Activated T-helper 2 cell treated with anti-CD3 and anti-CD28 coated beads, Interferon-gamma antibody, Interleukin-2, Interleukin-4, amounts not matched to agents 10 μg/mL and 5 μg/mL and 100 μg/mL, durations not matched to agents 14 hours and 24 hours and 36 hours (primary cell): ENCODE measurements at regions of chr22 and their contacts with region 1.

Region 1: DNA sequence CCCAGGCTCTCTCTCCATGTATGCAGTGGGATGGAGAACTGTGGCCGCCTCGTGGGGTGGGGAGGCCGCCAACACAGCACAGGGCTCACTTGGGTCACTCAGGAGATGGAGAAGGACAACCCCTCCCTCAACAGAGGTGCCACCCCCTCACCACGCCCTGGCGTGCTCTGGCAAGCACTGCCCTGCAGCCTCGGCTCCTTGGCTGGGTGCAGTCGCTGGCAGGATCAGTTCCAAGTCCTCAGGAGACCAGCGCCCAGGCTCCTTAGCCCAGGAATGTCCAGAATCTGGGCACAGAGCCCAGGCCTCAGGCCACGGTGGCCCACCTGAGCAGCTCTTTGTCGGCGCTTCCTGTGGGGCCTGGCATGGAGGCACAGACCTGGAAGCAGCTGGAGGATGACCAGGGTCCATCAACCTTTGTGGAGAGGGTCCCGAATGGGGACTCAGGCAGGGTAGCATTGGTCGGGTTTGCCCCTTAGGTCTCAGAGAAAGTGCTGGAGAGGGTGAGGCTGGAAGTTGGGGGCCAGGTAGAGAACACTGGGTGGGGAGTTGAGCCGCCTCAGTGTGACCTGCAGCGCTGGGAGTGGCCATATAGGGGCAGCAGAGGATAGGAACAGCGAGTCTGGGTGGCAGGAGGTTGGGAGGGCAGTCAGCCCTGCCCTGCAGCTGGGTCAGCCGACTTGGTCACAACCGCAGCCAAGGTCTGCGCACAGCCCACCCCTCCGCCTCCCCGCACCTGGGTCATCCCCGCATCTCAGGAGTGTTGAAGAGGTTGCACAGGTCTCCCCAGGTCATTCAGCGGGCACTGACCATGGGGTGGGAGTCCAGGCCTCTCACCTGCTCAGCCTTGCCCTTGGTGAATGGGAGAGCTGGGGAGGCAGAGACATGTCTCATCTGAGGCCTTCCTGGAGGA is 8.2 kb downstream of the SUSD2 start:
- DNase-seq: peak; percentile 55
- H3K4me3 Mint-ChIP-seq: no peak overlapping the region
- H3K27ac Mint-ChIP-seq: peak overlapping the region; percentile 82
- H3K4me1 Mint-ChIP-seq: peaks cover 5% of the 10 kb centered on the region
- H3K27me3 Mint-ChIP-seq: no peaks in the 10 kb centered on the region

Region 2: GRCh38 chr22:24230911-24231656 is 41.6 kb after region 1 on chr22:
- intact Hi-C with region 1: loop called (anchors 1 kb)
- DNase-seq: peak; percentile 50
- H3K4me3 Mint-ChIP-seq: no peak overlapping the region
- H3K27ac Mint-ChIP-seq: peak overlapping the region; percentile 58
- H3K4me1 Mint-ChIP-seq: peaks cover 2% of the 10 kb centered on the region
- H3K27me3 Mint-ChIP-seq: no peaks in the 10 kb centered on the region

Region 3: DNA sequence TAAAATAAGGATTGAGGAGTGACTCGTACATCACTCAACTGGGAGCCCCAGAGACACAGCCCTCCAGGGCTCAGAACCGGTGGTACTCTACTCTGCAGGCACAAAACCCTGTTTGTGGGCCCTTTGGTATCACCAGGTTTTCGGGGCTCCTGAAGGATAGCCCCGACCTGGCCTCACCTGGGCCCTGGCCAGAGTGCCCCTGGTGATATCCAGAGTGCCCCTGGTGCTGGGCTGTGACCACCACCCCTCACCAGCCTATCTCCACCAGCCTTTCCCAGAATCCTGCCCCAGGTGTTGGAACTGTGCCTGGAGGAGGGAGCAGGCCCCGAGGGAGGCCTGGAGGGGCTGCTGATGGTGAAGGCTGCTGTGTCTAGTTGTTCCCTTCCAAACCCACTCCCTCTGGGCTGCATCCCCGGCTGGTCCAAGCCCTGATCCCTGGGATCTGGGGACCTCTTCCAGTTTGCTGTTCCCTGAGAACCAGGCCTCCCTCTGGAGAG is 57.6 kb after region 1 on chr22:
- intact Hi-C with region 1: loop called (anchors 2 kb)
- DNase-seq: no peak
- H3K4me3 Mint-ChIP-seq: no peak overlapping the region
- H3K27ac Mint-ChIP-seq: no peak overlapping the region
- H3K4me1 Mint-ChIP-seq: peaks cover 20% of the 10 kb centered on the region
- H3K27me3 Mint-ChIP-seq: no peaks in the 10 kb centered on the region

Region 4: DNA sequence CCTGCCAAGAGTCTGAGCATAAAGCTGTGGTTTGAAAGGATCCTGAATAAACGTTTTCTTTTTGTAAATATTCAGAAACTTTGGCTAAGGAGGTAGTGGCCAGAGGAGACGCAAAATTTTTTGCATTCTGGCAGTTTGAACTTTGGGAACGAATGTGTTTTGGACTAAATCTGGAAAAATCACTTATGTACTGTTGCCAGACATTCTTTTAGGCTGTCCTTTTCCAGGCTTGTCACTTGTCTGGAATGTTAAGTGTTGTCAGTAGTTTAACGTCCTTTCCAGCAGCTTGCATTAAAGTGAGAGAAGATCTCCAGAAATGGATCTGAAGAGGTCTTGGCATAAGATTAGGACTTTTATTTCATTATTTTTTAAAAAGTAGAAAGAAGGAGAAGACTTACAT is 99.6 kb after region 1 on chr22:
- intact Hi-C with region 1: no loop called
- DNase-seq: no peak
- H3K4me3 Mint-ChIP-seq: no peak overlapping the region
- H3K27ac Mint-ChIP-seq: no peak overlapping the region
- H3K4me1 Mint-ChIP-seq: peaks cover 24% of the 10 kb centered on the region
- H3K27me3 Mint-ChIP-seq: no peaks in the 10 kb centered on the region